ENCODE measurements at regions of chr4 and their contacts with region 1.

Region 1: GRCh38 chr4:38179690-38180377 is 219.6 kb downstream of the PTTG2 start:
- DNase-seq: peak; percentile 54
- ATAC-seq: peak; percentile 75
- H3K4me3 Mint-ChIP-seq: no peak overlapping the region
- H3K27ac Mint-ChIP-seq: peak overlapping the region; percentile 15
- H3K4me1 Mint-ChIP-seq: peaks cover 28% of the 10 kb centered on the region
- H3K27me3 Mint-ChIP-seq: peaks cover 6% of the 10 kb centered on the region
- CTCF ChIP-seq: peak; percentile 96

Region 2: GRCh38 chr4:38062088-38062893 is 117.5 kb before region 1 on chr4:
- CTCF ChIA-PET with region 1: no interaction called
- POLR2A ChIA-PET with region 1: no interaction called
- intact Hi-C with region 1: loop called (anchors 2 kb)
- DNase-seq: no peak
- ATAC-seq: peak; percentile 49
- H3K4me3 Mint-ChIP-seq: peak overlapping the region; percentile 57
- H3K27ac Mint-ChIP-seq: no peak overlapping the region
- H3K4me1 Mint-ChIP-seq: peaks cover 14% of the 10 kb centered on the region
- H3K27me3 Mint-ChIP-seq: no peaks in the 10 kb centered on the region
- CTCF ChIP-seq: peak; percentile 81

Region 3: DNA sequence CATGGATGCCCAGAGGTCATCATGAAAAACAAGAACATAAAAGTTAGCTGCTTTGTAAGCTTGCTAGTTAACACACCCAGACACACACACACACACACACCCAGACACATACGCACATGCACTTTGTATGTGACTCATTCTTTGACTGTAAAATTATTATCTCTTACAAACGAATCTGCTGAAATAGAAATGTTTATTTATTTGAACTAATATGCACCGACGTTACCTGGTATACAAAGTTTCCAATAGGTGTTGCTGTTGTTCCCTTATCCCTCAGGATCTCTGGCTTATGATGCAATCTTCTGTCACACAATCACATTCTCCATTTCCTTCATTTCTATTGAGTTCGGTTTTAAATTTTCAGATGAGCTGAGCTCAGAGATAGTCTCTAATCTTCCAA is 10.3 kb before region 1 on chr4:
- CTCF ChIA-PET with region 1: interaction called, 10 read pairs
- POLR2A ChIA-PET with region 1: no interaction called
- intact Hi-C with region 1: no loop called
- DNase-seq: no peak
- ATAC-seq: no peak
- H3K4me3 Mint-ChIP-seq: no peak overlapping the region
- H3K27ac Mint-ChIP-seq: no peak overlapping the region
- H3K4me1 Mint-ChIP-seq: no peaks in the 10 kb centered on the region
- H3K27me3 Mint-ChIP-seq: peaks cover 22% of the 10 kb centered on the region
- CTCF ChIP-seq: no peak

Region 4: DNA sequence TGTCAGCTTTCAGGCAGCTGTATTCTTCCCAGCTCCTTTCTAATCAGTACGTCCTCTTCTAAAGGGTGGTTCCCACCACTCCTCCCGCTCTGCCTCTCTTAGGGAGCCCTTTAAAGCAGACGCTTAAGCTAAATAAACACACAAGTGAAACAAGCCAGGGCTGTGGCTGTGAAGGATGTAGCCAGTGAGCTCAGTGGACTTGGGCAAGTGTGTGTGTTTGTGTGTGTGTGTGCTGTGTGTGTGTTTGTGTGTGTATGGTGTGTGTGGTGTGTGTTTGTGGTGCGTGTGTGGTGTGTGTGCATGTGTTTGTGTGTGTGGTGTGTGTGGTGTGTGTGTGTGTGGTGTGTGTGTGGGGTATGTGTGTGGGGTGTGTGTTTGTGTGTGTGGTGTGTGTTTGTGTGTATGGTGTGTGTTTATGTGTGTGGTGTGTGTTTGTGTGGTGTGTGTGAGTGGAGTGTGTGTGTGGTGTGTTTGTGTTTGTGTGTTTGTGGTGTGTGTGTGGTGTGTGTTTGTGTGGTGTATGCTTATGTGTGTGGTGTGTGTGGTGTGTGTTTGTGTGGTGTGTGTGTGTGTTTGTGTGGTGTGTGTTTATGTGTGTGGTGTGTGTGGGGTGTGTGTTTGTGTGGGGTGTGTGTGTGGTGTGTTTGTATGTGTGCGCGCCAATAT is 63.7 kb after region 1 on chr4:
- CTCF ChIA-PET with region 1: no interaction called
- POLR2A ChIA-PET with region 1: no interaction called
- intact Hi-C with region 1: no loop called
- DNase-seq: no peak
- ATAC-seq: no peak
- H3K4me3 Mint-ChIP-seq: no peak overlapping the region
- H3K27ac Mint-ChIP-seq: no peak overlapping the region
- H3K4me1 Mint-ChIP-seq: no peaks in the 10 kb centered on the region
- H3K27me3 Mint-ChIP-seq: peaks cover 4% of the 10 kb centered on the region
- CTCF ChIP-seq: no peak

Region 5: GRCh38 chr4:38647101-38647819 is 467.4 kb after region 1 on chr4:
- CTCF ChIA-PET with region 1: no interaction called
- POLR2A ChIA-PET with region 1: no interaction called
- intact Hi-C with region 1: no loop called
- DNase-seq: no peak
- ATAC-seq: no peak
- H3K4me3 Mint-ChIP-seq: no peak overlapping the region
- H3K27ac Mint-ChIP-seq: no peak overlapping the region
- H3K4me1 Mint-ChIP-seq: peaks cover 6% of the 10 kb centered on the region
- H3K27me3 Mint-ChIP-seq: peaks cover 10% of the 10 kb centered on the region
- CTCF ChIP-seq: no peak

Region 6: DNA sequence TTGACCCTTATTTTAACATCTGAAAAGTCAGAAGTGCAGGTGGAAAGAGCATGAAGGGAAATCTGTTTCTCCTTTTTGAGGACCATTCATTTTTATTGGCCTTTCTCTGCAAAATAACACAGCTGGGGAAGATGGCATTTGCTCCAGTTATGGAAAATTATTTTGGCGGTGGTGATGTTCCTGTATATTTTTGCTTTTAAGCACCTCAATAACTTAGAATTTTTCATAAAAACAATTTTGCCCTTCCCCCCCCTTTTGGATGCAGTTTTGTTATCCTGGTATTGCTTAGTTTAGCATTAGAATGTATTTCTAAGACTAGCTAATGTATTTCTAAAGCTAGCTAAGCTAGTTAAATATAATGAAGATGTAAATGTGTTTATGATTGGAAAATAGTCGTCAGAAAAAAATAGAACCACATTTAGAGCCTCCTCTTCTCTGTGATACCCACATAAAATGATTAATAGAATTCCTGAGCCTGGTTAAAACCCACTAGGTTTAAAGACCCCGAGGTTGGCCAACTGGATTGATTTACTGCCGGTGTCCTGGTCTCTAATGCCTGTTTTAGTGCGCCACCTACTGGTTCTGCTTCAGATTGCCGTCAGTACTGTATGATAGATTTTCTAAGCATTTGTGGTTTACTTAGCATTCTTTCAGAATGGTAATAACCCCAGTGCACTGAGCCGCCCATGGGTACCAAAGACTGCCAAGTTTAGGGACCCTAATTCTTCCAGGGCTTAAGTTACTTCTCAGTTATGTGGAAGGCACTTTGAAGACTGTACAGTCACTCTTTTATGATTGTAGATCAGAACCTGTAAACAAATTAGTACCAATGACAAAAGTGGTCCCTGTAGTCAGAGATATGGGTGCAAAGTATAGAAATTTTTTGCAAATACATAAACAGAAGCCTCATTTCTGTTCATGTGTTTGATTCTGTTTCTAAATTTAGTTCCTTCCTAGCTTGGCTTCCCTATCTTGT is 495.6 kb after region 1 on chr4:
- CTCF ChIA-PET with region 1: interaction called, 221 read pairs
- POLR2A ChIA-PET with region 1: interaction called, 7 read pairs
- intact Hi-C with region 1: loop called (anchors 1 kb)
- DNase-seq: peak; percentile 56
- ATAC-seq: peak; percentile 75
- H3K4me3 Mint-ChIP-seq: peak overlapping the region; percentile 53
- H3K27ac Mint-ChIP-seq: peak overlapping the region; percentile 46
- H3K4me1 Mint-ChIP-seq: peaks cover 66% of the 10 kb centered on the region
- H3K27me3 Mint-ChIP-seq: no peaks in the 10 kb centered on the region
- CTCF ChIP-seq: peak; percentile 21

Region 7: GRCh38 chr4:38730830-38731646 is 551.2 kb after region 1 on chr4:
- CTCF ChIA-PET with region 1: interaction called, 92 read pairs
- POLR2A ChIA-PET with region 1: interaction called, 4 read pairs
- intact Hi-C with region 1: loop called (anchors 1 kb)
- DNase-seq: peak; percentile 74
- ATAC-seq: peak; percentile 89
- H3K4me3 Mint-ChIP-seq: peak overlapping the region; percentile 48
- H3K27ac Mint-ChIP-seq: peak overlapping the region; percentile 65
- H3K4me1 Mint-ChIP-seq: peaks cover 31% of the 10 kb centered on the region
- H3K27me3 Mint-ChIP-seq: no peaks in the 10 kb centered on the region
- CTCF ChIP-seq: no peak

Region 8: DNA sequence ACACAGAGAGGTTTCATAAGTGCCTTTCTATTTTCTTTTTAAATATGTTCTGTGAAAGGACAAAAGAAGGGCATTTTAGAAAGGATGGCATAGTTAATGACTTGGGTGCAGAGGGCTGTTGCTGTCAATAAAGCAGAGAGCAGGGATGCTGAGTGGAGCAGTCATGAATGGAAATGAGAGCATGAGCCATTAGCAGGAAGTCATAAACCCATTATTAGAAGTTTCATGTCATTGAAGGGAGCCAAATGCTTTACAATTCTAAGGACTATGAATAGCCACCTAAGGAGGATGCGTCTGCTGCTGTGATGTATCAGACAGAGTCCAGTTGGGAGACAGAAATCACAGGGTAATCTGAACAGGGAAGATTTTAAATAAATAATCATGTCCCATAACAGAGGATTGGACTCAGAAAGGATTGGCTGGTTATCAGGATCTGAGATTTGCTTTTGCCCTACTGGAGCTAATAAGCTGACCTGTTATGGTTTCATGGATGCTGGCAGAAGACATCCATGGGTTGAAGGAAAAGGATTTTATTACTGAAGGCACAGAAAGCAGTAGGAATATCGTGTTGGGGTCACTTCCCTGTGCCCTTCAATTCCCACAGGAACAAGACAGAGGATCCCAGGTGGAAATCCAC is 955.0 kb after region 1 on chr4:
- CTCF ChIA-PET with region 1: interaction called, 11 read pairs
- POLR2A ChIA-PET with region 1: no interaction called
- intact Hi-C with region 1: loop called (anchors 10 kb)
- DNase-seq: no peak
- ATAC-seq: no peak
- H3K4me3 Mint-ChIP-seq: no peak overlapping the region
- H3K27ac Mint-ChIP-seq: peak overlapping the region; percentile 4
- H3K4me1 Mint-ChIP-seq: peaks cover 12% of the 10 kb centered on the region
- H3K27me3 Mint-ChIP-seq: no peaks in the 10 kb centered on the region
- CTCF ChIP-seq: no peak

Measured in activated B cell treated with CpG ODN at 0.5 μM for 24 hours (primary cell).